ENCODE measurements at regions of chr6 and their contacts with region 1.

Region 1: DNA sequence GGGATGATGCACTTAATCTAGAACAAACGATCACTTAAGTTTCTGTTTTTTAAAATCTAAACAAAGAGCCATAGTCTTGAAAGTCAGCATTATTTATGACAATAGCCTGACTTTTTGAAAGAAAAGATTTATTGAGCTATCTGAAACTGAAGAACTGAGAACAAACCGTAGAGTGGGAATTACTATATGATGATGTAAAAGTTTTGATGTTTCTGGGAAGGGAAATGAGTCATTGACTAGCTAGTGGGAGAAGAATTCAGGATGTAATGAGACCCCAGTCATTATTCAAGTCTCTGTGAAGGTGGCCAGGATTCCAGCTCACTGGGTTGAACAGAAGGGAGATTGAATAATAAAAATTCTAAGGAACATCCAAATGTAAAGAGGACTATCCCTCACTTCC is 83.4 kb upstream of the FABP7 start:
- DNase-seq: no peak
- H3K4me3 ChIP-seq: no peak overlapping the region
- CTCF ChIP-seq: no peak
- POLR2A ChIP-seq: no peak

Region 2: GRCh38 chr6:123547218-123547978 is 851.3 kb after region 1 on chr6:
- intact Hi-C with region 1: loop called (anchors 10 kb)
- DNase-seq: no peak
- H3K4me3 ChIP-seq: no peak overlapping the region
- CTCF ChIP-seq: no peak
- POLR2A ChIP-seq: no peak

Measured in lower leg skin (tissue), 4 donors.